Right ventricle myocardium inferior (tissue), 1 donor: ENCODE measurements at regions of chr17 and their contacts with region 1.

Region 1: GRCh38 chr17:55926276-55926990 is 175.6 kb downstream of the PCTP start:
- DNase-seq: no peak
- ATAC-seq: no peak

Region 2: DNA sequence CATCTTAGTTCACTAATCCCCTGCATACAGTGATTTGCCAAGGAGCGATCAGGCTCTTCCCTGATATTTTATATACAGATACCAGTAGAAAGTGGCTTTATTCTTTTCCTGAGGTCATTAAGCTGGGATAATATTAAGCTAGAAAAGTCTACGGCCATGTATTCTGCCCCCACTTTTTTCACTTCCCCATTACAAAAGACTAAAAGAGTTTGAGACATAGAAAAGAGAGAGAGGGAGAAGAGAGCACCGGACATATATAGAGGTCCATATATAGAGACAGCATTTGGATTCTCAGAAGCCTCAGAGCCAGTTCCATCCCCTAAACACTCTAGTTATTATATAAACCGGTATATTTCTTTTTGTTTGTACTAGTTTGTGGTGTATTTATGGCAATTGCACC is 60.4 kb after region 1 on chr17:
- intact Hi-C with region 1: loop called (anchors 10 kb)
- DNase-seq: no peak
- ATAC-seq: no peak